Lower leg skin (tissue), 4 donors: ENCODE measurements at regions of chr10 and their contacts with region 1.

Region 1: DNA sequence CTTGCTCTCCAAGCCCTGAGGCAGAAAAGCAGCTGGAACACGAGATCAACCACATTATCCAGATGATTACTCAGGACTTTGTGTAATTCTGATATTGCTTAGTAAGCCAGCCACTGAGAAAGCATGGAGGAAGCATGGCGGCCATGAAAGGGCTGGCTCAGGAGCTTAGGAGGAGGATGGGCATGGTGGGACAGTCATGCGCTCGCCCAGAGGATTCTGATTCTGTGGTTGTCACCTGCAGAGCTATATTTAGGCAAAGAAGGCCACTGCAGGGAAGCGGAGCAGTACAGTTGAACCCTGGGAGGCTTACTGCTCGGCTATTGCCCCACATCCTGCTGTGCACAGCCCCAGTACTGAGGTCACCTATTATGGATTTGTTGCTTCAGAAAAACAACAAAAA is 128.8 kb upstream of the DNAJB12 start:
- DNase-seq: no peak
- H3K4me3 ChIP-seq: no peak overlapping the region
- CTCF ChIP-seq: no peak
- POLR2A ChIP-seq: no peak

Region 2: GRCh38 chr10:72407927-72408600 is 75.4 kb before region 1 on chr10:
- intact Hi-C with region 1: no loop called
- DNase-seq: no peak
- H3K4me3 ChIP-seq: no peak overlapping the region
- CTCF ChIP-seq: no peak
- POLR2A ChIP-seq: no peak

Region 3: GRCh38 chr10:72466018-72466417 is 17.5 kb before region 1 on chr10:
- intact Hi-C with region 1: loop called (anchors 1 kb)
- DNase-seq: no peak
- H3K4me3 ChIP-seq: no peak overlapping the region
- CTCF ChIP-seq: no peak
- POLR2A ChIP-seq: no peak